ENCODE measurements at regions of chr1 and their contacts with region 1.

Region 1: DNA sequence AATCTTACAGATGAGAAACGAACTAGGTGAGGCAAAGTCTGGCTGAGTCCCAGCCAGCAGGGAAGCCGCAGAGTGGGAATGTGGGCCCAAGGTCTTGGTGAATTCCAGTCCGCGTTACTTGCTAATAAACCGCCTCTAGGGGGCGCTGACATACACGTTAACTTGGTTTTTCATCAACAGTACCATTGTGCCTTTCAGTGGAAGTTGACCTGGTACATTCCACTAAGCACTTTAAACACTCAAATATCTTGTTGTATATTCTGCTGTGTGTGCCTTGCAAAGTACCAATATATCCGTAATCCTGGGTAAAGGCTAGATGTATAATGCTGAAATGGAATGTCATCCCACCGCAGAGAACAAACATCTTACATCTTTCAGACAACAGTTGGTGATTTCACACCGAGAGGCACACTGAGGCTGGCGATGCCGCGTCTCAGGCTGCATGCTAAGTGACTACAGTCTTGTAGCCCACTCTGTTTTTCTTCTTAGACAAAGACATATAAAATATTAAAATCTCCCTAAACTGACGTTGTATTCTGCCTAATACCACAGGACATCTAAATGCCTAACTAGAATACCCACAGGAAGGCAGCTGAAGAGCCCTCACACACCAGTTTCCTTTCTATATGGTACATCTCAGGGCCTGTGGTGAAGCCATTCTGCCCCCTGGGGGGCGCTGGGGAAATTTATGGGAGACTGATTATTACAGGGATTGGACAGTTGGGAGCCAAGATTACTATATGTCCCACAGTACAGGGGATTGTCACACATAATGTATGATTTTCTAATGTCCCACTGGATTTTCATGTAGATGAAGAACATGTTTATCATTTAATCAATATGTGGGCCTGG is 49.2 kb upstream of the C1orf198 start:
- DNase-seq: peak; percentile 62 to 77 (median 69)
- ATAC-seq: peak; percentile 86 to 91 (median 90)
- H3K4me3 ChIP-seq: no peak overlapping the region
- H3K27ac ChIP-seq: no peak overlapping the region
- H3K4me1 ChIP-seq: no peaks in the 10 kb centered on the region
- H3K27me3 ChIP-seq: no peaks in the 10 kb centered on the region
- CTCF ChIP-seq: peak; percentile 61 to 82 (median 73)
- POLR2A ChIP-seq: no peak

Region 2: DNA sequence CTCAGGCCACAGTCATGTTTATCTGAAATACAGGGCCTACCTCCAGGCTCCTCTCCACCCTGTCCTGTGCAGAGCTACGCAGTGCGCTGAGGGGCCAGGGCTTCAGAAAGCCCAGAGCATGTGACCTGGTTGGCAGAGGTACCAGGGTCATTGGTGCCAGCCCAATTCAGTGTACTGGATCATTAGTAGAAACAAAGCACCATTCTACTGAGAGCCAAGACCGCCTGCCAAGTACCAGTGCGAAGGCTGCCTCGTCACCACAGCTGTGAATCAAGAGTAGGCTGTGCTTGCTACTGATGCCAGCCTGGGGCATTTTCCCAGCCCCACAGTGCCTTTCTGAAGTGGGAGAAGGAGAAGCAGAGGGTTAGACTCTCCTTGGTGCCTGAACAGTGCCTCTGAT is 110.5 kb before region 1 on chr1:
- intact Hi-C with region 1: no loop called
- DNase-seq: no peak
- ATAC-seq: peak in 2 of 4 donors; percentile 46 to 55
- H3K4me3 ChIP-seq: no peak overlapping the region
- H3K27ac ChIP-seq: no peak overlapping the region
- H3K4me1 ChIP-seq: no peaks in the 10 kb centered on the region
- H3K27me3 ChIP-seq: no peaks in the 10 kb centered on the region
- CTCF ChIP-seq: no peak
- POLR2A ChIP-seq: no peak

Region 3: GRCh38 chr1:231091831-231092301 is 174.4 kb after region 1 on chr1:
- intact Hi-C with region 1: loop called in 1 of 2 experiments (anchors 10 kb)
- DNase-seq: peak in 1 of 3 donors; percentile 29
- ATAC-seq: peak; percentile 65 to 70 (median 68)
- H3K4me3 ChIP-seq: no peak overlapping the region
- H3K27ac ChIP-seq: no peak overlapping the region
- H3K4me1 ChIP-seq: no peaks in the 10 kb centered on the region
- H3K27me3 ChIP-seq: no peaks in the 10 kb centered on the region
- CTCF ChIP-seq: peak; percentile 47 to 51 (median 49)
- POLR2A ChIP-seq: no peak

Region 4: GRCh38 chr1:231200388-231201031 is 283.0 kb after region 1 on chr1:
- intact Hi-C with region 1: loop called in 1 of 2 experiments (anchors 10 kb)
- DNase-seq: no peak
- ATAC-seq: peak in 1 of 4 donors; percentile 21
- H3K4me3 ChIP-seq: no peak overlapping the region
- H3K27ac ChIP-seq: no peak overlapping the region
- H3K4me1 ChIP-seq: no peaks in the 10 kb centered on the region
- H3K27me3 ChIP-seq: no peaks in the 10 kb centered on the region
- CTCF ChIP-seq: no peak
- POLR2A ChIP-seq: no peak

Region 5: DNA sequence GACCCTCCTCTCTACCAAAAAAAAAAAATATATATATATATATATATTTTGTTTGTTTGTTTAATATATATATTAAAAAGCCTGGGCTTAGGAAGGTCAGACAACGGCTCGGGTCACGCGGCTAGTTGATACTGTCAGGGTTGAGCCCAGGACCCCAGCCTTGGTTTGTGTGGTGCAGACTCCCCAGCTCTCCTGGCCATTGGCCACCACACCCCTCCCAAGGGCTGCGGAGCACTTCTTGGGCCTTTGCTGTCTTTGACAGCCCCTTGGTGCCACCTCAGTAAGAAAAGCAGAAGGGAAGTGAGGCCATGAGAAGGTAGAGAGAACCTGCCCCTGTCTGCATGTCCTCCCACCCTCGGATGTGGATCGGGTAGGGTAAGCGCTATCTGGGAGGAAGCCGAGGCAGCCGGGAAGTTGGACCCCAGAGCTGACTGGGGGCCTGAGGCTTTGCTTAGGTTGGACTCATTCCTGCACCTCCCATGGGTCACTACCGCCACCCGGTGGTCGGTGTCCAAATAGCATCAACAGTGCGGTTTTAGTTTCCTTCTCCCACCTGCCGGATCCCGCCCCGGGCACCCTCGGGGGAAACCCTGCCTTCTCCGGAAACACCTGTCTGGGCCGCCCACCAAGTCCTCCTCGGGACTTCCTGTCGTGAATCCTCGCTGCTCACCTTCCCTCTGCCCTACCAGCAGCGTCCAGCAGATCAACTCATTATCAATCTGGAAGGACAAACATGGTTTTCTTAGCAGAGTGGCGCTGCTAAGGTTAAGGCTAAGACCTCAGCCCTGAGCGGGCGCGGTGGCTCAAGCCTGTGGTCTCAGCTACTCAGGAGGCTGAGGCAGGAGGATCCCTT is 293.7 kb after region 1 on chr1:
- intact Hi-C with region 1: loop called (anchors 10 kb)
- DNase-seq: peak; percentile 83 to 84 (median 83)
- ATAC-seq: peak; percentile 92 to 99 (median 98)
- H3K4me3 ChIP-seq: peak overlapping the region; percentile 37 to 60 (median 54)
- H3K27ac ChIP-seq: peak overlapping the region in 1 of 3 donors; percentile 24
- H3K4me1 ChIP-seq: no peaks in the 10 kb centered on the region
- H3K27me3 ChIP-seq: no peaks in the 10 kb centered on the region
- CTCF ChIP-seq: peak; percentile 86 to 93 (median 90)
- POLR2A ChIP-seq: no peak